Heart right ventricle (tissue), 16 donors: ENCODE measurements at regions of chr15 and their contacts with region 1.

Region 1: DNA sequence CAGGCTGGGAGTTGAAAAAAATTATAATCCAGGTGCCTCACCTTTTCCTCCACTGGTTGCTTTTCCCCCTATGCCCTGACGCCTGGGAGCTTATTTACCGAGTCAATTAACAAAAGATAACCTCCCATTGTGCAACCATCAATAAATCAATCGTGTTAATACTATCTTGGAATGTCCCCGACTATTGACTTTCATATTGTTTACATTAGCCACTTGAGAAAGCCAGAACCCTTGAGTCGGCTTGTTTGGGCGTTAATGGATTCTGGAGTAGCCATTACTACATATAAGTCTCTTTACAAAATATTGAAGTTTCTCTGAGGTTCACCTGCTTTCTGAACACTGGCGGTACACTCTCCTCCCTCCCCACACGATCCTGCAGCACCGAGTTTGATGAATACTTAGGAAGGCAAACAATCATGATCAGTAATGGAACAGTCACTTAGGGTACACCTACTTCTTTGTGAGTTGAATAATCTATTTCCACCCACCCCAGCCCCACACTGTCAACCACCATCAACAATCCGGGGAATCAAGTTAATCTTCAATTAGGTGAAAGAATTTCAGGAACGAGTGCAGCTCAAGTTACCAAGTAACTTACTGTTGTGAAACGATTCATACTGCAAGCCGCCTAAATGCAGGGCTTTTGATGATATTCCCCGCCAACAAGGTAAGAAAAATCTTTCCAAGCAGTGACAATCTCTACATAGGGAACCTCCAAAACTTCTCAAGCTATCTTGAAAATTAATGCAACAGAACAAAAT is 159.3 kb upstream of the NR2F2 start:
- DNase-seq: no peak
- ATAC-seq: no peak
- H3K4me3 ChIP-seq: no peak overlapping the region
- H3K27ac ChIP-seq: no peak overlapping the region
- H3K4me1 ChIP-seq: peaks cover 0 to 1% (median 0%) of the 10 kb centered on the region in 9 donors
- H3K27me3 ChIP-seq: peaks cover 0 to 7% (median 0%) of the 10 kb centered on the region in 7 donors
- CTCF ChIP-seq: no peak

Region 2: GRCh38 chr15:96115642-96116041 is 55.5 kb before region 1 on chr15:
- intact Hi-C with region 1: loop called in 1 of 10 experiments (anchors 10 kb)
- DNase-seq: no peak
- ATAC-seq: no peak
- H3K4me3 ChIP-seq: no peak overlapping the region
- H3K27ac ChIP-seq: no peak overlapping the region
- H3K4me1 ChIP-seq: no peaks in the 10 kb centered on the region
- H3K27me3 ChIP-seq: no peaks in the 10 kb centered on the region
- CTCF ChIP-seq: no peak